ENCODE measurements at regions of chr20 and their contacts with region 1.

Region 1: GRCh38 chr20:25623736-25624499 is at the start of gene NANP:
- DNase-seq: peak; percentile 98
- ATAC-seq: peak; percentile 93 to 96 (median 95)
- H3K4me3 ChIP-seq: peak within 1 kb of the TSS; percentile 89
- H3K27ac ChIP-seq: peak within 1 kb of the TSS; percentile 92
- H3K4me1 ChIP-seq: peaks cover 10% of the 10 kb centered on the region
- H3K27me3 ChIP-seq: no peaks in the 10 kb centered on the region
- CTCF ChIP-seq: no peak
- total RNA-seq, gene NANP: 1.9 to 4.1 (median 2.6) TPM

Region 2: GRCh38 chr20:24981790-24982189 is 642.1 kb before region 1 on chr20:
- intact Hi-C with region 1: loop called in 1 of 2 experiments (anchors 10 kb)
- DNase-seq: peak; percentile 39 to 69
- ATAC-seq: no peak
- H3K4me3 ChIP-seq: no peak overlapping the region
- H3K27ac ChIP-seq: no peak overlapping the region
- H3K4me1 ChIP-seq: peaks cover 28% of the 10 kb centered on the region
- H3K27me3 ChIP-seq: no peaks in the 10 kb centered on the region
- CTCF ChIP-seq: no peak

Region 3: DNA sequence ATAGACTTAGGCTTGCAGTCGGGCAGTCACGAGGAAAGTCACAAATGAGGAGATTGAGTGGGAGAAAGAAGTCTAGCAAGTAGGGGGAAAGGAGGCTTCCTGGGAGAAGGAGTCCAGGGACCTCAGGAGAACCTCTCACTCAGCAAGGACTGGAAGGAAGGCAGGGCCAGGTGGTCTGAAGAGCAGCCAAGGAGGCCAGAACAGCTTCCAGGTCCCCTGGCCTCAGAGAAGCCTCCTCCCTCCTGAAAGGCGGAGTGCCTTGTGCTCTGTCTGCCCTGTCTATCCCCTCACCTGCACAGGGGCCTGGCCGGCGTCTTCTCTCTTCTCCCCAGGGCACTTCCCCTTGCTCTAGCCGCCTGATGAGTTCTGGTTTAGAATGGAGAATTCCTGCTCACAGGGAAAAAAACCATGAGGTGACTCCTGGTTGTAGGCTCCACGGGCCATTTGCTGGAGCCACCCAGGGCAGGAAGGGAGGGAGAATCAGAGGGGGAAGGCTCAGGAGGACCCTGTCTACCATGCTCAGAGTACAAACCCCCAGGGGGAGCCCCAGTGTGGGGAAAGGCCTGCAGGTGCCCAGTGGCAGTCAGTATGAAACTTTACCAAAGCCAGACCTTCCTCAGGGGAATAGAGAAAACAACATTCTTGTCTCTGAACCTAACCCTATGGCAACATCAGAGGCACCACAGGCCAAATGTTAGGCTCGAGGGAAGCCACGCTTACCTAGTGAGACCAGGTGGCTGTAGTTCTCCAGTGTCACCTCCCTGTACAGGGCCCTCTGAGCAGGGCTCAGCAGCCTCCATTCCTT is 61.6 kb after region 1 on chr20:
- intact Hi-C with region 1: loop called (anchors 5 to 10 kb)
- DNase-seq: no peak
- ATAC-seq: peak in 3 of 4 donors; percentile 7 to 29 (median 14)
- H3K4me3 ChIP-seq: no peak overlapping the region
- H3K27ac ChIP-seq: peak overlapping the region; percentile 82
- H3K4me1 ChIP-seq: peaks cover 19% of the 10 kb centered on the region
- H3K27me3 ChIP-seq: no peaks in the 10 kb centered on the region
- CTCF ChIP-seq: no peak